Activated CD4-positive, alpha-beta memory T cell treated with anti-CD3 and anti-CD28 coated beads, Interleukin-2, amount 10 ng/mL, durations not matched to agents 7 days and 5 days (primary cell): ENCODE measurements at regions of chr20 and their contacts with region 1.

Region 1: DNA sequence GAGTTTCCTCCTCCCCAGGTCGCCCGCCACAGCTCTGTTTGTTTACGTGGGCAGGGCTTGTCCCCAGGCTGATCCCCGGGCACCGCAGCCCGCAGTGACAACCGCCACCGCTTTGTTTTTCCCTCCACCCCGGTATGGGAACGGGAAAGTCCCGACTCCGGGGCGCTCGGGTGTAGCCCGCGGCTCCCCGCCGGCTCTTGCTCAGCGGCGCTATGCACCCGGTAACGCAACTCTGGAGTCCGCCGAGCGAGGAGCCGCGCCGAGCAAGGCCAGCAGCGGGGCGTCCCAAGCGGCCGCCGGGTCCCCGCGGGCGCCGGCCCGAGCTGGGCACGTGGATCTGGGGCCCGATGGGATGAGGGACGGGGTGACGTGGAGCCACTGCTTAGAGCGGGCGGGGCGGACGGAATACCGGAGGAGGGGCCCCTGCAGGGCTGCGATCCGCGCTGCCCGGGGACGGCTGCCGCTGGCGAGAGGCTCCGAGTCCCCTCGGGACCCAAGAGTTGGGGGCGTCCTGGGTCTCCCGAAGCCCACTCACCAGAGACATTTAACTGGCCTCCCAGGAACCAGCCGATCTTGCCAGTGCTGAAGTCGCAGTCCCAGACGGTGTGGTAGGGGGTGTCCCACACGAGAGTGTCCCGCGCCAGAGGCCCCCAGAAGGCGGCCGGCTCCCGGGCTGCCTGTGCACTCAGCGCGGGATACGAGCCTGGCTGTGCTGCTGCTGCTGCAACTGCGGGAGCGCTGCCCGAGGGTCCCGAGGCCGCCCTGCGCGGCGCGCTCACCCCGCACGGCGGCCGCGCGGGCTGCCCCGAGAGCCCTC is 497 bp downstream of the ACSS1 start:
- DNase-seq: peak; percentile 82
- H3K4me3 Mint-ChIP-seq: peak overlapping the region; percentile 82
- H3K27ac Mint-ChIP-seq: peak overlapping the region; percentile 89
- H3K4me1 Mint-ChIP-seq: peaks cover 44% of the 10 kb centered on the region
- H3K27me3 Mint-ChIP-seq: peaks cover 20% of the 10 kb centered on the region

Region 2: DNA sequence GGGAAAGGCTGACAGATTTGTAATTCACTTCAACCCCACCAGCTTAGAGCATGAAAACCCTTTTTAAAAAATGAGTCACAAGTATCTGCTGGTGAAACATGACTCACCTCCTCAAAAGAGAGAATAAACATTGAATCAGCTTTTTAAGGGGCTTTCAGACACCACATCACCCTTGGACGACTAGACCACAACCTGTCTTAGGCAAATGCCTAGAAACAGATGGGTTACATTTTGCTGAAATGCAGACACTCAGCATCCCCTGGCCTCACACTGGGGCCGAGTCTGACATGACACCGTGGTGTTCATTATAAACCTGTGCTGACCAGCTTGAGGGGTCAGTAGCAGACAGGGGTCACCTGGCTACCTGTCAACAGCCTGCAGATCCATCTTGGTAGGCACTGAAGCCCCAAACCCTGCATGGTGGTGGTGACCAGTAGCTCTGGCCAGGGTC is 283.7 kb before region 1 on chr20:
- CTCF ChIA-PET with region 1: no interaction called
- POLR2A ChIA-PET with region 1: no interaction called
- DNase-seq: peak; percentile 23
- H3K4me3 Mint-ChIP-seq: no peak overlapping the region
- H3K27ac Mint-ChIP-seq: no peak overlapping the region
- H3K4me1 Mint-ChIP-seq: peaks cover 13% of the 10 kb centered on the region
- H3K27me3 Mint-ChIP-seq: peaks cover 31% of the 10 kb centered on the region

Region 3: DNA sequence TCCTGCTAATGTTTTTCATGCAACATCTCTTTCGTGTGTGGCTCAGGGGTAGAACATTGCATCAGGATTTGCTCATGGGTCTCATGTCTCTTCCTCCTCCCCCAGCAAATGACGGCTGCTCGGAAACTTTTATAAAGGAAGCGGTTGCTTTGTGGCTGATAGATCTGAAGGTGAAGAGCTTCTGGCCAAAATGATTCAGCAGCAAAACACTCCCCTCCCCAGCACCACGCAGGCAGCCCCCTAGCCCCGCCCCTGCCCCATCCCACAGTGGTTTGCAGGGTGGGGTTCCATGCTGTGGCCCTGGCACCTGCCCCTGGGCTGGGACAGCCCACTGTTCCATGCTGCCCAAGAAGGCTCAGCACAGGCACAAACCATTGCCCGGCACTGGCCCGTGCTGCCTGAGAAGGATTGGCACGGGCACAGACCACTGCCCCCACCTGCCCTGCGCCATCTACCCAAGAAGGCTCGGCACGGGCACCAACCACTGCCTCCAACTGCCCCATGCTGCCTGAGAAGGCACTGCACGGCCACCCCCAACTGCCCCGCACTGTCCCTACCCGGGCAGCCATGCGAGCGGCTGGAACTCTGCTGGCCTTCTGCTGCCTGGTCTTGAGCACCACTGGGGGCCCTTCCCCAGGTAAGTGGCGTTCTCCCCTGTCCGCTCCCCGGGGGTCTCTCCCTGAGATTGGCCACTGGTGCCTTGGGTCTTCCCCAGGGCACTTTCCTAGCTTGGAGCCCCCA is 108.3 kb before region 1 on chr20 and contains the start of gene CST7:
- CTCF ChIA-PET with region 1: no interaction called
- POLR2A ChIA-PET with region 1: interaction called, 16 read pairs
- DNase-seq: peak; percentile 93
- H3K4me3 Mint-ChIP-seq: peak within 1 kb of the TSS; percentile 89
- H3K27ac Mint-ChIP-seq: peak within 1 kb of the TSS; percentile 98
- H3K4me1 Mint-ChIP-seq: peaks cover 69% of the 10 kb centered on the region
- H3K27me3 Mint-ChIP-seq: no peaks in the 10 kb centered on the region
- total RNA-seq, gene CST7: 178 to 182 TPM

Region 4: GRCh38 chr20:25032478-25033280 is 24.8 kb before region 1 on chr20:
- CTCF ChIA-PET with region 1: no interaction called
- POLR2A ChIA-PET with region 1: interaction called, 17 read pairs
- DNase-seq: no peak
- H3K4me3 Mint-ChIP-seq: no peak overlapping the region
- H3K27ac Mint-ChIP-seq: no peak overlapping the region
- H3K4me1 Mint-ChIP-seq: peaks cover 22% of the 10 kb centered on the region
- H3K27me3 Mint-ChIP-seq: no peaks in the 10 kb centered on the region

Region 5: GRCh38 chr20:25072226-25072811 is 14.9 kb after region 1 on chr20:
- CTCF ChIA-PET with region 1: interaction called, 3 read pairs
- POLR2A ChIA-PET with region 1: interaction called, 10 read pairs
- DNase-seq: no peak
- H3K4me3 Mint-ChIP-seq: no peak overlapping the region
- H3K27ac Mint-ChIP-seq: no peak overlapping the region
- H3K4me1 Mint-ChIP-seq: no peaks in the 10 kb centered on the region
- H3K27me3 Mint-ChIP-seq: peaks cover 66% of the 10 kb centered on the region

Region 6: DNA sequence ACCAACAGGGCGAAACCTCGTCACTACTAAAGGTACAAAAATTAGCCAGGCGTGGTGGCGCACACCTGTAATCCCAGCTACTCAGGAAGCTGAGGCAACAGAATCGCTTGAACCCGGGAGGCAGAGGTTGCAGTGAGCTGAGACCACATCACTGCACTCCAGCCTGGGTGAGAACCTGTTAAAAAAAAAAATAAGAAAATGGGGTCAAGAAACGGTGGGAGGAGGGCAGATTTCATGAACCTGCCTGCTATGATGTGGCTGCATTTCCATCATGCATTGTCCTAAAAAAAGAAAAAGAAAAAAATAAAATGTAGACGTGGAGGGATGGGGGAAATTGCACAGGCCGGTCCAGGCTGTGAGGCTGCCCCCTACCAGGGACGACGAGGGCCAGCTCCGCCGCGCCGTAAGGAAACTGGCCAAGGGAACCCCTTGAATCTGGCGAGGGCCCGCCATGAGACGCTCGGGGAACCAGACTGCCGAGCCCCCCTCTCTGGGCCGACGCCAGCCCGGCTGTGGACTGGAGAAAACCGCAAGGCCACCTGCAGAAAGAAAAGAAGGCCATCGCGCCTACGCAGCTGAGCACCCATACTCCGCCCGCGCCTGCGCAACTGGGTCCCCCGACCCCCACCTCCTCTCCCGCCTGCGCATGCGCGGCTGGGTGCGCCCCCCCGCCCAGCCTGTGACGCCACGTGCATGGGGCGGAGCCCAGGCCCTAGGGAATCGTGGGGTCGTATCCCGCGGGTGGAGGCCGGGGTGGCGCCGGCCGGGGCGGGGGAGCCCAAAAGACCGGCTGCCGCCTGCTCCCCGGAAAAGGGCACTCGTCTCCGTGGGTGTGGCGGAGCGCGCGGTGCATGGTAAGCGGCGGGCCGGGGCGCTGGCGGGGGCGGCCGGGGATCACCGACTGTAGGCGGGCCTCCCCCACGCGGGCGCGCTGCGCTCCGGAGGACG is 137.8 kb after region 1 on chr20 and contains the start of gene ENTPD6:
- CTCF ChIA-PET with region 1: no interaction called
- POLR2A ChIA-PET with region 1: interaction called, 14 read pairs
- DNase-seq: peak; percentile 89
- H3K4me3 Mint-ChIP-seq: peak within 1 kb of the TSS; percentile 88
- H3K27ac Mint-ChIP-seq: peak within 1 kb of the TSS; percentile 59
- H3K4me1 Mint-ChIP-seq: peaks cover 33% of the 10 kb centered on the region
- H3K27me3 Mint-ChIP-seq: no peaks in the 10 kb centered on the region
- total RNA-seq, gene ENTPD6: 47.7 to 48.2 TPM